Activated naive CD4-positive, alpha-beta T cell treated with anti-CD3 and anti-CD28 coated beads for 36 hours (primary cell): ENCODE measurements at regions of chr18 and their contacts with region 1.

Region 1: GRCh38 chr18:61955644-61956043 is 62.8 kb upstream of the RNF152 start:
- DNase-seq: no peak
- H3K4me3 Mint-ChIP-seq: no peak overlapping the region
- H3K27ac Mint-ChIP-seq: no peak overlapping the region
- H3K4me1 Mint-ChIP-seq: peaks cover 30% of the 10 kb centered on the region
- H3K27me3 Mint-ChIP-seq: peaks cover 2% of the 10 kb centered on the region

Region 2: GRCh38 chr18:61917818-61918217 is 37.8 kb before region 1 on chr18:
- CTCF ChIA-PET with region 1: no interaction called
- intact Hi-C with region 1: loop called (anchors 1 kb)
- DNase-seq: no peak
- H3K4me3 Mint-ChIP-seq: no peak overlapping the region
- H3K27ac Mint-ChIP-seq: no peak overlapping the region
- H3K4me1 Mint-ChIP-seq: peaks cover 18% of the 10 kb centered on the region
- H3K27me3 Mint-ChIP-seq: no peaks in the 10 kb centered on the region

Region 3: GRCh38 chr18:61972389-61973264 is 17.0 kb after region 1 on chr18:
- CTCF ChIA-PET with region 1: no interaction called
- intact Hi-C with region 1: loop called (anchors 1 kb)
- DNase-seq: no peak
- H3K4me3 Mint-ChIP-seq: no peak overlapping the region
- H3K27ac Mint-ChIP-seq: no peak overlapping the region
- H3K4me1 Mint-ChIP-seq: peaks cover 16% of the 10 kb centered on the region
- H3K27me3 Mint-ChIP-seq: no peaks in the 10 kb centered on the region

Region 4: DNA sequence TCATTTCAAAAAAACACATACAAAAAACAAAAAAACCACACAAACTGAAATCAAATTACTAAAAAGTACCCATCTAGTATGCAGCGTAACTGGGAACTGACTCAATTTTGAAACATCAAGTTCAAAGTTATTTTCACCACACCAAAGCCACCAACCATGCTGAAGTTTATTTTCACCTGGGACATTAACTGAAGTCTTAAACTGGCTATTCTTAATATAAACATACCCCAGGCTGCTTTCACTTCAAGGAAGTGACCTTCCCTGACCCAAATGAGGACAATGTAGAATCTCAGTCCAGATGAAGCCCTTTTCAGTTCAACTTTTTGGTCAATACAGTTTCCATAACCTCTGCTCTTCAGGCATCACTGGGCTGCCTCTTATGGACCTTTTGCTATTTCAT is 146.6 kb after region 1 on chr18:
- CTCF ChIA-PET with region 1: no interaction called
- intact Hi-C with region 1: loop called (anchors 1 kb)
- DNase-seq: no peak
- H3K4me3 Mint-ChIP-seq: no peak overlapping the region
- H3K27ac Mint-ChIP-seq: no peak overlapping the region
- H3K4me1 Mint-ChIP-seq: peaks cover 4% of the 10 kb centered on the region
- H3K27me3 Mint-ChIP-seq: no peaks in the 10 kb centered on the region

Region 5: GRCh38 chr18:62258616-62259015 is 303.0 kb after region 1 on chr18:
- CTCF ChIA-PET with region 1: no interaction called
- intact Hi-C with region 1: no loop called
- DNase-seq: no peak
- H3K4me3 Mint-ChIP-seq: no peak overlapping the region
- H3K27ac Mint-ChIP-seq: no peak overlapping the region
- H3K4me1 Mint-ChIP-seq: no peaks in the 10 kb centered on the region
- H3K27me3 Mint-ChIP-seq: no peaks in the 10 kb centered on the region

Region 6: GRCh38 chr18:62505669-62506494 is 550.2 kb after region 1 on chr18:
- CTCF ChIA-PET with region 1: no interaction called
- intact Hi-C with region 1: loop called (anchors 1 kb)
- DNase-seq: peak; percentile 63
- H3K4me3 Mint-ChIP-seq: peak overlapping the region; percentile 55
- H3K27ac Mint-ChIP-seq: peak overlapping the region; percentile 86
- H3K4me1 Mint-ChIP-seq: peaks cover 20% of the 10 kb centered on the region
- H3K27me3 Mint-ChIP-seq: no peaks in the 10 kb centered on the region